Activated T-helper 1 cell treated with anti-CD3 and anti-CD28 coated beads, Interleukin-12 subunit alpha, Interleukin-12 subunit beta, Interleukin-2, Interleukin-4 antibody, amounts not matched to agents 30 ng/mL and 10 ng/mL and 1 ng/mL, durations not matched to agents 14 hours and 24 hours and 36 hours (primary cell): ENCODE measurements at regions of chr19 and their contacts with region 1.

Region 1: GRCh38 chr19:39970675-39971379 is at the start of gene PSMC4:
- DNase-seq: peak; percentile 99
- H3K4me3 Mint-ChIP-seq: peak within 1 kb of the TSS; percentile 95
- H3K27ac Mint-ChIP-seq: peak within 1 kb of the TSS; percentile 97
- H3K4me1 Mint-ChIP-seq: peaks cover 54% of the 10 kb centered on the region
- H3K27me3 Mint-ChIP-seq: no peaks in the 10 kb centered on the region
- total RNA-seq, gene PSMC4: 189 and 190 TPM in 2 replicates

Region 2: DNA sequence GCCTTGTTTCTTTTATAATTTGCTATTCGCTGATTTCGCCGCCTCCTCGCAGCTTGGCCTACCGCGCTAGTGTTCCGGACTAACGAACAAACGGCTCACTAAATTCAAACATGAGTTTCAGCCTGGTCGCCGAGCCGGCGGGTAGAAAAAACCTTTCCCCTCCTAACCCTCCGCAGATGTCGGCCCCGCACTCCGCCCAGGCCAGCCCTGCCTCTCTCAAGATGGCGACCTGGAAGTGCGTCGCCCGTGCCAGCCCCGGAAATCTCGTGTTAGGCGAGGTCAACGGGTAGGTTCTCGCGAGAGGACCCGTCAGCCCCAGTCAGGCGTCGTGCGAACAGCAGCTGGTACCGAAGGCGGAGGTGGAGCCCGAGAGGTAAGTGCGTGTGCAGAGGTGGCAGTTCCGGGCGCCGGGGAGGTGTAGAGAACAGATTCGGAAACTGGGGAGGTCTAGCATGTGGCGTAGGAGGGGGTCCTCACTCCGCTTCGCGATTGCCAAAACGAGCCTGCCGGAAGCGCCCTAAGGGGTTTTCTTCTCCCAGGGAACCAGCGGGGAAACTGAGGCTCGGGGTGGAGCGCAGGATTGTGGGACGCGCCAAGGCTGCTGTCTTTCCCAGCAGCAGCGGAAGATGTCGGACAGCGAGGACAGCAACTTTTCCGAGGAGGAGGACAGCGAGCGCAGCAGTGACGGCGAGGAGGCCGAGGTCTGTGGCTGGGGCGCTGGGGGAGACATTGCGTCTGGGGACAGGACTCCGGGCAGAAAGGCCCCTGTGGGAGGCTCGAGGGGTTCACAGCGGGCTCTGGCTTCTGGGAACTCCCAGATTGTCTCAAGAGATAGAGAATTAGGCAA is 525.3 kb before region 1 on chr19 and contains the start of gene SUPT5H:
- intact Hi-C with region 1: loop called (anchors 10 kb)
- DNase-seq: peak; percentile 97
- H3K4me3 Mint-ChIP-seq: peak within 1 kb of the TSS; percentile 91
- H3K27ac Mint-ChIP-seq: peak within 1 kb of the TSS; percentile 94
- H3K4me1 Mint-ChIP-seq: peaks cover 41% of the 10 kb centered on the region
- H3K27me3 Mint-ChIP-seq: no peaks in the 10 kb centered on the region
- total RNA-seq, gene SUPT5H: 200 and 203 TPM in 2 replicates

Region 3: GRCh38 chr19:39824143-39825092 is 146.4 kb before region 1 on chr19:
- intact Hi-C with region 1: loop called (anchors 1 kb)
- DNase-seq: peak; percentile 87
- H3K4me3 Mint-ChIP-seq: no peak overlapping the region
- H3K27ac Mint-ChIP-seq: no peak overlapping the region
- H3K4me1 Mint-ChIP-seq: peaks cover 6% of the 10 kb centered on the region
- H3K27me3 Mint-ChIP-seq: no peaks in the 10 kb centered on the region

Region 4: DNA sequence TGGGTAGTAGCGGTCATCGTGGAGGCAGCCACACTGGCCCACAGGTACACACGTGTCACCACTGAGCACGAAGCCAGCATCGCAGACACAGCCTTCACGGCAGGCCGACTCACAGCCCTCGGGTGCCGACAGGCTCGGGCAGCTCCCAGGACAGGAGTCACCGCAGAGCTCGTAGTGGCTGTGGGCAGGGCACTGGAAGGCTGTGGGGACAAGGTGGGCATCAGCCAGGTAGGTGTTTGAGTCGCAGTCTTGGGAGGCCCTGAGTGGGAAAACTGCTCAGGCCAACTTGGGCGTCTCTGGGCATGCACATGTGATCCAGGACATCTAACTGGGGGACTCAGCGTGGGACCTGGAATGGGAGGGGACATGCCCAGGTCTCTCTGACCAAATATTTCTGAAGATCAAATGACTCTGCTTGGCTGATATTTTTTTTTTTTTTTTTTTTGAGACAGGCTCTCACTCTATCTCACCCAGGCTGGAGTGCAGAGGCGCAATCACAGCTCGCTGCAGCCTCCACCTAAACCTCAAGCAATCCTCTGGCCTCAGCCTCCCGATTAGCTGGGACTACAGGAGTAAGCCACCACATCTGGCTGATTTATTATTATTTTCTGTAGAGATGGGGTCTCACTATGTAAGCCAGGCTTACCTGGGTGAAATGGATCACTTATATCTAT is 80.8 kb before region 1 on chr19:
- intact Hi-C with region 1: loop called (anchors 5 kb)
- DNase-seq: no peak
- H3K4me3 Mint-ChIP-seq: no peak overlapping the region
- H3K27ac Mint-ChIP-seq: no peak overlapping the region
- H3K4me1 Mint-ChIP-seq: peaks cover 6% of the 10 kb centered on the region
- H3K27me3 Mint-ChIP-seq: no peaks in the 10 kb centered on the region

Region 5: GRCh38 chr19:39996811-39997594 is 26.2 kb after region 1 on chr19 and contains the start of gene ZNF546:
- intact Hi-C with region 1: loop called (anchors 1 kb)
- DNase-seq: peak; percentile 87
- H3K4me3 Mint-ChIP-seq: peak within 1 kb of the TSS; percentile 99
- H3K27ac Mint-ChIP-seq: peak within 1 kb of the TSS; percentile 100
- H3K4me1 Mint-ChIP-seq: peaks cover 41% of the 10 kb centered on the region
- H3K27me3 Mint-ChIP-seq: no peaks in the 10 kb centered on the region
- total RNA-seq, gene ZNF546: 6.1 and 7.1 TPM in 2 replicates

Region 6: GRCh38 chr19:40025938-40026596 is 55.2 kb after region 1 on chr19:
- intact Hi-C with region 1: no loop called
- DNase-seq: no peak
- H3K4me3 Mint-ChIP-seq: no peak overlapping the region
- H3K27ac Mint-ChIP-seq: no peak overlapping the region
- H3K4me1 Mint-ChIP-seq: no peaks in the 10 kb centered on the region
- H3K27me3 Mint-ChIP-seq: no peaks in the 10 kb centered on the region

Region 7: GRCh38 chr19:40147693-40148347 is 177.0 kb after region 1 on chr19:
- intact Hi-C with region 1: no loop called
- DNase-seq: no peak
- H3K4me3 Mint-ChIP-seq: no peak overlapping the region
- H3K27ac Mint-ChIP-seq: no peak overlapping the region
- H3K4me1 Mint-ChIP-seq: peaks cover 37% of the 10 kb centered on the region
- H3K27me3 Mint-ChIP-seq: no peaks in the 10 kb centered on the region

Region 8: DNA sequence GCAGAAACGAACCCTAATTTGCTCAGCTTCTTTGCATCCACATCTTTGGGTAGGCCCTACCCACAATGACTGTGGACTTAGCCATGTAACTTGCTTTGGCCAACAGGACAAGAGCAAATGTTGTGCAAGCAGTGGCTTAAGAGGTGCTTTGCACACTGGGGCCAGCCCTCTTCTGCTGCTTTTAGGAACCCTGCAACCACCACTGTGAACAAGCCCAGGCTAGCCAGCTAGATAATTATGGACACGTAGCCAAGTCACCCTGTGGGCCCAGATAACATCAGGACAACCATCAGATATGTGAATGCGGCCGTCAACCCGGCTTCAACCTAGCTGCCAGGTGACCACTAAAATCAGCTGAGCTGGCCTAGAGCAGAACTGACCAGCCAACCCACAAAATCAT is 360.2 kb after region 1 on chr19:
- intact Hi-C with region 1: no loop called
- DNase-seq: no peak
- H3K4me3 Mint-ChIP-seq: no peak overlapping the region
- H3K27ac Mint-ChIP-seq: no peak overlapping the region
- H3K4me1 Mint-ChIP-seq: peaks cover 6% of the 10 kb centered on the region
- H3K27me3 Mint-ChIP-seq: no peaks in the 10 kb centered on the region

Region 9: DNA sequence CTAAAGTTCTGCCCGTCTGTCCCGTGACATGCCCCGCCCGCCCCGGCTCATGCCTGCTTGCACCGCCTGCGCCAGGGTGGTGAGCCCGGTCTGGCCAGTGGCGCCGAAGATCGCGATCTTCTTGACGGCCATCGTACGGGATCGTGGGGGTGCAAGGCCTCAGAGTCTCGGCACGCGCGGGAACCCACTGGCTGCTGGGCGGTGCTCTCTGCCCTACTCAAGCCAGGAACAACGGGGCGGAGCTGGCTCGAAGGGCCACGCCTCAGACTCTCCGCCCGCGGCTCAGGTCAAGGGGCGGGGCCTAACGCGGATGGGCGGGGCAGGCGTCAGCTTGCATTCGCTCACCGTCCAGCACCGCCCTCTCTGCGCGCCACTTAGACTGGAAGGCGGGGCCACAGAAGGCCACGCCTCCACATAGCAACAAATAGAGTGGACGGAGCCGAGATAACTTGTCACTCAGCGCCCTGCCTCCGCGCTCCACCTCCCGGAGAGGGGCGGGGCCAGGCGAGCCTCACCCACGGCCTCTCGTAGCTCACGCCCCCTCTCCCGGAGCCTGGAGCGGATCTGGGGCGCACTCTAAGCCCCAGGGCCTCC is 494.8 kb after region 1 on chr19 and contains the start of gene BLVRB:
- intact Hi-C with region 1: loop called (anchors 1 kb)
- DNase-seq: peak; percentile 99
- H3K4me3 Mint-ChIP-seq: peak within 1 kb of the TSS; percentile 77
- H3K27ac Mint-ChIP-seq: peak within 1 kb of the TSS; percentile 92
- H3K4me1 Mint-ChIP-seq: peaks cover 28% of the 10 kb centered on the region
- H3K27me3 Mint-ChIP-seq: peaks cover 27% of the 10 kb centered on the region
- total RNA-seq, gene BLVRB: 6.1 and 8.2 TPM in 2 replicates